Posterior vena cava (tissue), 2 donors: ENCODE measurements at regions of chr7 and their contacts with region 1.

Region 1: DNA sequence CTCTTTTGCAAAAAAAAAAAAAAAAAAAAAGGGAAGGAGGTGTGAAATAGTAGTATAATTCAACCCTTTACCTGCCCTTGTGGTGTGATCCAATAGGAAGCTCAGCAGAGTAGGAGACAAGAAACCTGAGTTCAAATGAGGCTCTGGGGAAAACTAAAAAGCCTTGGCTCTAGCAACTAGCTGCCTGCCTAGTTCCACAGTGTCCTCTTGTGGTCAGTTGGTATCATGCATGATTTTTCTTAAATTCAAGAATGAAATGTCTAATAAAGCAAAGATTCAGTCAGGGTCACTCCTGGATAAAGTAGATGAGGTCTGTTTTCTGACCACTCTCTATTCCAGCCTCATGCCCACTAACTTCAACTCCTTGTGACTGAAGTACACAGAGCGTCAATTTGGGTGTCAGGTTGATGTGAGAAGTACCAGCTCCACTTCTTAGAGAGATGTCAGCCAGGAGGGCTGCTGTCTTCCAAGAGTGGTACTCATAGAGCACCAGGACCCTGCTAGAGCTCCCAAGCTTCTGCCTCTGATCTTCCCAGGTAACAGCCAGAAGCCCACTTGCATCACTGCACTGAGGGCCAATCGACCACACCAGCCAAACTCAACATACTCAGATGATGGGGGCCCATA is 10.5 kb downstream of the LSM5 start:
- DNase-seq: no peak

Region 2: DNA sequence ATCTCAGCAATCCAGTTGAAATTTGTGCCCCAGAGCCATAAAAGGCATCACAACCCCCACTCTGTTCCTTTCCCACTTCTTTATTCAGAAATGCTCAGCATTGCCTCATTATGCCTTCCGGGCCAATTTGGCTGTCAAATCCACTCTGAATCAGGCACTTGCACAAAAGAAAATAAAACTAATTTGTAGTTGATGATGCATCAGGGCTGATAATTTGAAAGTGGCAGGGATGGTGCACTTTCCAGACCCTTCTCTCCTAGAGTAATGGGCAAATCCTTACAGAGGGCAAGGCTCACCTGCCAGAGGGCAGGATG is 261.6 kb before region 1 on chr7:
- intact Hi-C with region 1: loop called in 1 of 2 experiments (anchors 10 kb)
- DNase-seq: no peak